Ascending aorta (tissue), 2 donors: ENCODE measurements at regions of chr6 and their contacts with region 1.

Region 1: DNA sequence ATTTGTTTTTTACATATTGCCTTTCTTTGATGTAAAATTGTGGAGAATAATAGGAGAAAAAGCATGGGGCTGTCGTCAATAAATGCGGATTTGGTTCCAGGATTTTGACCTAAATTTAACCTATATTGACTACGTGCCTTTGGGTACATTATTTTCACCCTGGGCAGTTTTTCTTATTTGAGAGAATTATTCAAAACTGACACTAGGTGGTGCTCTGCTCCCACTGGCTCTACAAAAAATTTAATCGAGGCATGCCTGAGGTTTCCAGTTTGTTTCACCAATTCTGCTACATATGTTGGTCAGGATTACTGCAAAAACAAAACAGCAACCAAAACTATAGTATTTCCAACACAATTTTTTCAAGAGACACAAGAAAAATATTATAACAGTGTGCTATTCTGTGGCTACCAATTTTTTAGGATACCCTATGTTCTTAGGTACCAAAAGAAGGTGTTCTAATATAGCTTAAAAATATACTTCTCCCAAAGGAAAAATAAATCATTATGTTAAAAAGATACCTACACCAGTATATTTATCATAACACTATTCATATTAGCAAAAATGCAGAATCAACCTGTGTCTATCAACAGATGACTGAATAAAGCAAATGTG is 48.6 kb upstream of the FABP7 start:
- DNase-seq: no peak
- H3K4me3 ChIP-seq: no peak overlapping the region
- H3K27ac ChIP-seq: no peak overlapping the region
- H3K4me1 ChIP-seq: no peaks in the 10 kb centered on the region
- H3K27me3 ChIP-seq: no peaks in the 10 kb centered on the region
- CTCF ChIP-seq: peak; percentile 30 to 77 (median 57)

Region 2: DNA sequence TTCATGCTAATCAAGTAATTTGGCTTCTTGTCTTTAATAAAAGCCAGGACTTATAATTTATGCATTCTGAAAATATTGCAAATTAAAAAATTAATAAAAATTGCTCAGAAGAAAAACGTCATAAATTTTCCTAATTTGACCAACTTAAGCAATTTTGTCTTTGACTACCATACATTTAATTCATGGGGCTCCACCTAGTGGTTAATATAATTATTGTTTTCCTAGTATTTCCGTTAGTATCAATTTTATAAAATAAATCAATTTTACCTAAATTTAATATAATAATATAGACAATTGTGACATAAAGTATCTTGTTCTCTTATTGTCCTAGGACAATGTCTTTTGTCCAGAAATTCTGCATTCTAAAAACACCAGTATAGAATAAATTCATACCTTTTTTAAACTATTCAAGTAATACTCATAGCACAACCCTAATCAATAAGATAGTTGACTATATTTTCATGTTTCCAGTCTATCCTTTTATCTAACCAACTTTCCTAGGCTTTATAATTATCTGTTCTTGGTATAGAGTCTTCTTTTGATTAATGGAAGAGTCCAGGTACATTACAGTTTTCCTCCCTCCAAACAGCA is 585.9 kb after region 1 on chr6:
- intact Hi-C with region 1: loop called (anchors 5 kb)
- DNase-seq: no peak
- H3K4me3 ChIP-seq: no peak overlapping the region
- H3K27ac ChIP-seq: no peak overlapping the region
- H3K4me1 ChIP-seq: no peaks in the 10 kb centered on the region
- H3K27me3 ChIP-seq: no peaks in the 10 kb centered on the region
- CTCF ChIP-seq: peak in 2 of 3 experiments; percentile 34 to 43